Lower lobe of right lung (tissue), 2 donors: ENCODE measurements at regions of chr2 and their contacts with region 1.

Region 1: DNA sequence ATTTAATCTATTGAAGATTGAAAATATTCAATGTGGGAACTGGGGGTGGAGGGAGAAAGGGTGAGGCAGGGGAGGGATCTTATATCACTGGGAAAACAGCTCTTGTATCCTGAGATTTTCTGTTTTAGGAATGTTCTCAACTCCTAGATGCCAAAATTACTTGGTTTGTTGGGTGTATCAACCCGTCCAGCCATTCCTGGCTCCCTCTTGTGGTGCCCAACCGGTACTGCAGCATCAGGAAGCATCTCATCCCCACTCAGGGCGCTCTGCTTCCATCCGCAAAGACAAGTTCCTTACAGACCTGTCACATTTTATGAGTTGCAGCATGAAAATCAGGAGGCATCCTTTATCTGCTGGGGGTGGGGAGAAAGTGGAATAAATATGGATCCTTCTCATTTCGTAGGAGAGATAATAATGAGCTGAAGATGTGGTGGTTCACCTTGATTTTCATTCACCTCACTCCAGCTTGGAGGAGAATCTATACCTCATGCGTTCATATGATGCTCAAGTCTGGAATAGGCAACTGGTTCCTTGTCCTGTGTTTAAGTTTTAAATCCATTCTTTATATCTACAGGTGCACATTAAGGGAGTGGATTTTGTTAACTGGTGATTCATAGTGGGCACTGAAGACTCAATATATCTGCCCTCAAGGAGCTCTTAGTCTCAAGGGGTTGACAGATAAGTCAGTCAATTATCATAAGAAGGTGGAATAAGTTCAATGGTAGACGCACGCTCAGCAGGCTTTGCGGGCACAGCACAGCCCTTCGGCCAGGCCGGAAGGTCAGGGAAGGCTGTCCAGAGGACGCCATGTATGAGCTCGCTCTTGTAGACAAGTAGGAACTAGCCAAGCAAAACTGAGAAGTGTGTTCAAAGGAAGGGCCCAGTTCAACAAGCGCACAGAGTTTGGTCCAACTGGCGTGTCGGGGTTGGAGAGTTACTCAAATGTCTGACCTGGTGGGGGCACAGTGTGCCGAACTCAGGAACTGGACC is 127.3 kb downstream of the RNF144A start:
- DNase-seq: peak; percentile 75
- ATAC-seq: peak; percentile 83 to 88
- H3K4me3 ChIP-seq: no peak overlapping the region
- H3K27ac ChIP-seq: no peak overlapping the region
- H3K4me1 ChIP-seq: peaks cover 9% of the 10 kb centered on the region
- H3K27me3 ChIP-seq: no peaks in the 10 kb centered on the region
- CTCF ChIP-seq: peak; percentile 94

Region 2: DNA sequence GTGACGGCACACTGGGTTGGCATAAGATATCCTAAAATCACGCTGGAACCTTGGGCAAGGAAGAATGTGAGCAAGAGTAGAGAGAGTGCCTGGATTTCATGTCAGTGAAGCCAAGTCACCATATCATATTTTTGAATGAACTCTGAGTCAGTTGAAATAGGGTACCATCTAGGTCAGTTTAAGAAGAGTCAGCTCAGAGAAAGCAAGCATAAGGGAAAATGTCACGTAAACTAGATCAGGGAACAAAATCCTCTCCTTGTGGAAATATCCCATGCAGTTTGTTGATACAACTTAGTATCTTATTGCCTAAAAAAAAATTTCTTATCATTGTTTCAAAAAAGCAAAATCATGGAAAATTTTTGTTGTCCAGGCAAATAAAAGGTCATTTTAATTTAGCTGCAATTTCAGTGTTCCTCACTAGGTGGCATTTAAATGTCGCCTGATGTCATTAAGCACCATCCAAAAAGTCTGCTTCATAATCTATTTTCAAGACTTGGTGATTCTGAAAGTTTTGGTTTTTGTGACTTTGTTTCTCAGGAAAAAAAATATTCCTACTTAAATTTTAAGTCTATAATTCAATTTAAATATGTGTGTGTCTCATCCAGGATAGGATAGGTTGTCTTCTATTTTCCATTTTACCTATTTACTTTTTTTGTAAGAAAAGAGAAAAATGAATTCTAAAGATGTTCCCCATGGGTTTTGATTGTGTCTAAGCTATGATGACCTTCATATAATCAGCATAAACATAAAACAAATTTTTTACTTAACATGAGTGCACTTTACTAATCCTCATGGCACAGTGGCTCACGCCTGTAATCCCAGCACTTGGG is 147.4 kb before region 1 on chr2:
- intact Hi-C with region 1: loop called (anchors 10 kb)
- DNase-seq: no peak
- ATAC-seq: peak in 1 of 2 donors; percentile 49
- H3K4me3 ChIP-seq: no peak overlapping the region
- H3K27ac ChIP-seq: no peak overlapping the region
- H3K4me1 ChIP-seq: no peaks in the 10 kb centered on the region
- H3K27me3 ChIP-seq: no peaks in the 10 kb centered on the region
- CTCF ChIP-seq: peak; percentile 63